ENCODE measurements at regions of chr6 and their contacts with region 1.

Region 1: DNA sequence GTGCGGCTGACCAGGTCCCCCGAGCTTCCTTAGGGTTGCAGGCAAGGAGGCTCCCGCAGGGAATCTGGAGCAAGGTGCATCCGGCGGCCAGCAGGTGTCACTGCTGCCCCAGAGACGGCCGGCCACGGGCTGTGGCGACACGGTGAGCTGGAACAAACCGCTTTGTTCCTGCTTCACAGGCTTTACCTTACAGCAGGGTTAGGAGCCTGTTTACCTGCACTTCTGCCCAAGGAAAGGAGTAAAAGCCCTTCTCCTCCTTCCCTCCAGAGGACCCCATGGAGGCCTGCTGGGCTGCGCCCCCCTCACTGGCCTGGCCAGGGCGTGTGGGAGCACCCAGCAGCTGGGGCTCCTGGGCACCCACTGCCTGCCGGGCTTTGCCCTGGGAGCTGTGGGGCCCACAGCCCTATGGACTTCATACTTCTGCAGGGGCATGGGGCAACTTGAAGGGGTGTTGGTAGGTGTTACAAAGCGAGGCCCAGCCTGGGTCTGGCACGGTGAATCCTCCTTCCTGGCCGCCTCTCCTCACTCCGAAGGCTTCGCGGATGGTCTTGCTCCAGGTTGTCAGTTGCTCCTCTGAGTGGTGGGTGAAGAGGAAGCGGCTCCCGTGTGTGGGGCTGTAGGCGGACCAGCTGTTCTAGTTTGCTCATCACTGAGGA is 88.4 kb downstream of the CDC5L start:
- DNase-seq: peak; percentile 51
- ATAC-seq: peak; percentile 99
- H3K4me3 ChIP-seq: peak overlapping the region in 1 of 2 experiments; percentile 11; a peak in 1 of 4 replicates
- H3K27ac ChIP-seq: peak overlapping the region; percentile 13; the same call in 1 of the 2 replicates
- H3K4me1 ChIP-seq: peaks cover 3 to 12% of the 10 kb centered on the region in 2 experiments; a peak in 3 of 4 replicates
- H3K27me3 ChIP-seq: no peaks in the 10 kb centered on the region
- CTCF ChIP-seq: peak; percentile 82 to 96 (median 86)
- POLR2A ChIP-seq: no peak
- RAD21 ChIP-seq: peak; percentile 99

Region 2: DNA sequence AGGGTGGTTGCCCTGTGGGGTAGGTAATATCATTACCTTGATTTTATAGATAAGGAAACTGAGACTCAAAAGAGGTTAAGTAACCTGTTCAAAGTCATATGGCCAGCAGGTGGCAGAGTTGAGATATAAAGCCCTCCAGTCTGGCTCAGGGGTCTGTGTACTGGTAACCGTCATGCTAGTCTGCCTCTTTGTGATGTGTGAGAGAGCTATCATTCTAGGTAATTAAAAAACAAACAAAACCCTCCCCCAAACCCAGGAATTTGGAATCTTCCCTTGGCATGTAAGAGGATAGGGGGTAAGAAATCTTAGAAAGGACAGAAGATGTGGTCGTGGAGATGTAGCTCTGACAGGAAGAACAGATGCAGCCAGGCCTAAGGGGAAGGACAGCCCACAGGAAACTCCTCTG is 117.6 kb after region 1 on chr6:
- CTCF ChIA-PET with region 1: interaction called, 10 read pairs
- POLR2A ChIA-PET with region 1: no interaction called
- RAD21 ChIA-PET with region 1: interaction called, 3 read pairs
- intact Hi-C with region 1: loop called (anchors 10 kb)
- DNase-seq: peak; percentile 54
- ATAC-seq: peak; percentile 96
- H3K4me3 ChIP-seq: no peak overlapping the region
- H3K27ac ChIP-seq: no peak overlapping the region
- H3K4me1 ChIP-seq: no peaks in the 10 kb centered on the region
- H3K27me3 ChIP-seq: no peaks in the 10 kb centered on the region
- CTCF ChIP-seq: peak; percentile 43 to 71 (median 62); a peak in 5 of 6 replicates
- POLR2A ChIP-seq: no peak
- RAD21 ChIP-seq: peak; percentile 67

Region 3: DNA sequence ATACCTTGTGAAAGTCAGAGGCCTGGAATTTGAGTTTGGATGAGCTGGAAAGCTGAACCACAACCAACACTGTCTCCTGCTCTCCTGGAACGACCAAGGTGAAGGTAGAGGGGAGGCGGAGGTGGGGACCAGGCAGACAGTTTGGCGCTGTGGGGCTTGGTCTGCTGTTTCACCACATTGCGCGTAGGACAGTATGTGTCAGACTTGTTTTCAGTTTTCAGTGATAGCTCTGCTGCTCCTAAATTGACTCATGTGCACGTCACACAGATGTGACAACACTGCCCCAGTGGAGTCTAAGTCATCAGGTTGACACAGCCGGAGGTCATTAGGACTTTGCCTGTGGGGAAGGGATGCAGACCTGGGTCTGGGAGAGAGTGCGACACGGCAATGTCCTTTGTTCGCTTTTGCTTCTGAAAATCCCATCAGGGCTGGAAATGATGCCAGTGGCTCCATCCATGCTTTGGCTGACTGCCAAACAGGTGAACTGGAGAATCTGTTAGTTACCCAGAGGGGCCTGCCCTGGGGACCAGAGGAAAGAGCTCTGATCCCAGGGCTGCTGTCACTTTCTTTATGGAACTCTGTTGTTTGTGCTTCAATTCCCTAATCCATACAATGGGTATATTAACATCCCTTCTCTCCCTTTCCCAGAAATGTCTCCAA is 167.1 kb after region 1 on chr6:
- CTCF ChIA-PET with region 1: interaction called, 37 read pairs
- POLR2A ChIA-PET with region 1: no interaction called
- RAD21 ChIA-PET with region 1: no interaction called
- intact Hi-C with region 1: loop called (anchors 1 kb)
- DNase-seq: no peak
- ATAC-seq: no peak
- H3K4me3 ChIP-seq: no peak overlapping the region
- H3K27ac ChIP-seq: no peak overlapping the region
- H3K4me1 ChIP-seq: no peaks in the 10 kb centered on the region; a peak in 1 of 4 replicates
- H3K27me3 ChIP-seq: no peaks in the 10 kb centered on the region
- CTCF ChIP-seq: no peak
- POLR2A ChIP-seq: no peak
- RAD21 ChIP-seq: no peak

Region 4: GRCh38 chr6:45436544-45437438 is 960.9 kb after region 1 on chr6:
- CTCF ChIA-PET with region 1: no interaction called
- POLR2A ChIA-PET with region 1: no interaction called
- RAD21 ChIA-PET with region 1: no interaction called
- intact Hi-C with region 1: loop called (anchors 10 kb)
- DNase-seq: no peak
- ATAC-seq: no peak
- H3K4me3 ChIP-seq: peak overlapping the region in 1 of 2 experiments; percentile 13; a peak in 1 of 4 replicates
- H3K27ac ChIP-seq: no peak overlapping the region
- H3K4me1 ChIP-seq: peaks cover 45 to 50% of the 10 kb centered on the region in 2 experiments
- H3K27me3 ChIP-seq: no peaks in the 10 kb centered on the region
- CTCF ChIP-seq: no peak
- POLR2A ChIP-seq: no peak
- RAD21 ChIP-seq: no peak

Region 5: GRCh38 chr6:45922728-45923351 is 1446.9 kb after region 1 on chr6:
- CTCF ChIA-PET with region 1: interaction called, 45 read pairs
- POLR2A ChIA-PET with region 1: interaction called, 3 read pairs
- RAD21 ChIA-PET with region 1: interaction called in 1 of 2 experiments, 11 read pairs
- intact Hi-C with region 1: loop called (anchors 1 kb)
- DNase-seq: peak; percentile 52
- ATAC-seq: peak; percentile 93
- H3K4me3 ChIP-seq: no peak overlapping the region
- H3K27ac ChIP-seq: no peak overlapping the region
- H3K4me1 ChIP-seq: no peaks in the 10 kb centered on the region
- H3K27me3 ChIP-seq: no peaks in the 10 kb centered on the region
- CTCF ChIP-seq: peak; percentile 67 to 88 (median 81)
- POLR2A ChIP-seq: no peak
- RAD21 ChIP-seq: peak; percentile 95